Heart left ventricle (tissue), 16 donors: ENCODE measurements at regions of chr2 and their contacts with region 1.

Region 1: DNA sequence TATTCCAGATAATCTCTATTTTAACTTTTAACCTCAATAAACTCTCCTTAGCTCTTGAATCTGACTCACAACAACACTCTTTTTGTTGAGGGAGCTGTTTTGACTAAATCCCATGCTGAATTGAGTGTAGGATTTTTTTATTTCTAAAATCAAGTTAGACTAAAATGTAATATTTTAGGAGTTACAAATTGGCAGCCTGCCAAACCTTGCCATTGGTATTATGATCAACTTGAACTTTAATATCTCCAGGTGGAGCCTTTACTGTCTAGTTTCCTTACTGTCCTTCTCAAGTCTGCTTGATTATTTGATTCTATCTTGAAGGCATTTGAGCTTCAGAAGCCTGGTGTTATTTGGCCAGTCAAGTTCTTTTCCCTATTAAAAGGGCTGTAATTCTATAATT is 8.7 kb downstream of the PIKFYVE start:
- DNase-seq: no peak
- ATAC-seq: no peak
- H3K4me3 ChIP-seq: no peak overlapping the region
- H3K27ac ChIP-seq: no peak overlapping the region
- H3K4me1 ChIP-seq: no peaks in the 10 kb centered on the region
- H3K27me3 ChIP-seq: no peaks in the 10 kb centered on the region
- CTCF ChIP-seq: no peak
- POLR2A ChIP-seq: no peak

Region 2: DNA sequence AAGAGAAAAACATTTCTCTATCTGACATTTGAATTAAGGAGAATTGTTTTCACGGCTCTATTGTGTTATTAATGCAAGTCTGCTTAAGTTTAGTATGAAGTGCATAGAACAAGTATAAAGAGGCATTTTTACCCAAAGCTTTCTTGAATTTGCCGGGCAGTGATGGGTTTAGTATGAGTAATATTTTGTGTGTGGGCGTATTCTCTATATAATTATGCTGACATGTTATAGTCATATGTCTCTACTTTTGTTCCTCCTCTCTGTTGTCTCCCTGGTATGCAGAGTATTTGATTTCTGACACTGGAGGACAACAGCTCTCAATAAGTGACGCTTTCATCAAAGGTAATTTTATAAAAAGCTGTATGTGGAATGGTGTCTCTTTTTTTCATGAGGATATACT is 37.2 kb after region 1 on chr2:
- intact Hi-C with region 1: loop called in 1 of 10 experiments (anchors 5 kb)
- DNase-seq: no peak
- ATAC-seq: no peak
- H3K4me3 ChIP-seq: no peak overlapping the region
- H3K27ac ChIP-seq: no peak overlapping the region
- H3K4me1 ChIP-seq: peaks cover 0 to 4% (median 0%) of the 10 kb centered on the region in 12 donors
- H3K27me3 ChIP-seq: no peaks in the 10 kb centered on the region
- CTCF ChIP-seq: no peak
- POLR2A ChIP-seq: no peak

Region 3: GRCh38 chr2:208359632-208359986 is 84.9 kb after region 1 on chr2:
- intact Hi-C with region 1: no loop called
- DNase-seq: peak in 1 of 5 donors; percentile 62
- ATAC-seq: peak; percentile 32 to 74 (median 40)
- H3K4me3 ChIP-seq: peak overlapping the region in 2 of 12 donors; percentile 24 to 33
- H3K27ac ChIP-seq: no peak overlapping the region
- H3K4me1 ChIP-seq: no peaks in the 10 kb centered on the region
- H3K27me3 ChIP-seq: no peaks in the 10 kb centered on the region
- CTCF ChIP-seq: no peak
- POLR2A ChIP-seq: no peak